T-cell (primary cell): ENCODE measurements at regions of chr12 and their contacts with region 1.

Region 1: GRCh38 chr12:66169221-66170170 is at the start of gene TMBIM4:
- DNase-seq: peak; percentile 60 to 90 (median 79)
- ATAC-seq: peak; percentile 80 to 82 (median 80)
- H3K4me3 ChIP-seq: peak within 1 kb of the TSS; percentile 96 to 99
- H3K4me3 Mint-ChIP-seq: peak within 1 kb of the TSS; percentile 90 to 96 (median 90)
- H3K27ac ChIP-seq: peak within 1 kb of the TSS; percentile 99
- H3K27ac Mint-ChIP-seq: peak within 1 kb of the TSS; percentile 98
- H3K4me1 ChIP-seq: peaks cover 12 to 17% of the 10 kb centered on the region in 2 experiments
- H3K4me1 Mint-ChIP-seq: peaks cover 54 to 60% (median 54%) of the 10 kb centered on the region in 3 donors
- H3K27me3 ChIP-seq: peaks cover 0 to 6% of the 10 kb centered on the region in 2 experiments
- H3K27me3 Mint-ChIP-seq: no peaks in the 10 kb centered on the region
- total RNA-seq, gene TMBIM4: 44.7 to 90.0 (median 76.7) TPM

Region 2: GRCh38 chr12:66130277-66131066 is 39.0 kb before region 1 on chr12 and contains the start of gene LLPH:
- CTCF ChIA-PET with region 1: interaction called, 3 to 22 read pairs
- POLR2A ChIA-PET with region 1: interaction called, 9 to 40 read pairs
- DNase-seq: peak; percentile 75 to 95 (median 87)
- ATAC-seq: peak; percentile 96 to 98 (median 96)
- H3K4me3 ChIP-seq: peak within 1 kb of the TSS; percentile 80 to 98
- H3K4me3 Mint-ChIP-seq: peak within 1 kb of the TSS; percentile 84 to 99 (median 98)
- H3K27ac ChIP-seq: peak within 1 kb of the TSS; percentile 84
- H3K27ac Mint-ChIP-seq: peak within 1 kb of the TSS; percentile 96
- H3K4me1 ChIP-seq: peaks cover 14 to 17% of the 10 kb centered on the region in 2 experiments
- H3K4me1 Mint-ChIP-seq: peaks cover 62 to 68% (median 62%) of the 10 kb centered on the region in 3 donors
- H3K27me3 ChIP-seq: no peaks in the 10 kb centered on the region
- H3K27me3 Mint-ChIP-seq: no peaks in the 10 kb centered on the region
- total RNA-seq, gene LLPH: 16.6 to 24.3 (median 22.3) TPM